ENCODE measurements at regions of chr16 and their contacts with region 1.

Region 1: DNA sequence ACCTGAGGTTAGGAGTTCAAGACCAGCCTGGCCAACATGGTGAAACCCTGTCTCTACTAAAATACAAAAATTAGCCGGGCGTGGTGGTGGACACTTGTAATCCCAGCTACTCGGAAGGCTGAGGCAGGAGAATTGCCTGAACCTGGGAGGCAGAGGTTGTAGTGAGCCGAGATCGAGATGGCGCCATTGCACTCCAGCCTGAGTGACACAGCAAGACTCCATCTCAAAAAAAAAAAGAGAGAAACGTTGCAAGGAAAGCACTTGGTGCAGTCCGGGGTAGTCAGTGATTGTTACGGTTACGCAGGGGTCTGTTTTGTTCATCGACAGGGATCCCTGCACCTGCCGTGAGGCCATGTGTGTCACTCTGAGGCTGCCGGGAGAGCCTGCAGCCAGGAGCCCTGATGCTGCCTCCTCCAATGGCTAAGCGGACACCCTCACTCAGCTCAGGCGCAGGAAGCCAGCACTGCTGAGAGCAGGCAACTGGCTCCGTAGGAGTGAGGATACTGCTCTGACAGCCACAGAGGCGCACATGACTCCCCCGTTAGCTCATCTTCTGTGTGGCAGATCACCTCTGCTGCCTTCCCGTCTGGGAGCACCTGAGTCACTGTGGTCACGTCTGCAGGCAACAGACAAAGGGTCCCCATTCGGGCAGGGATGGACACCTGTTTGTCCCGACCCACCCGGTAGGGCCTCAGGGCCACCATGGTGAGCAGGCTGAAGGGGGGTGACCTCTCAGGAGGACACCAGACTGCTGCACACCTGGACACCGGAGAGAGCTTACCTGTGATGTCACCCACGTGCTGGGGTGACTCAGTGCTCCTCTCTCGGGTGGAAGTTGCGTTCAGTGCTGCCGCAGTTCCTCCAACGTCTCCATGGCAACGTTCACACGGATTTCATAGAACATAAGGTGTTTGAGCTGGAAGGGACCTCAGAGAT is 5.2 kb upstream of the RAB26 start:
- H3K4me3 Mint-ChIP-seq: no peak overlapping the region
- H3K27ac Mint-ChIP-seq: no peak overlapping the region
- H3K4me1 Mint-ChIP-seq: peaks cover 11% of the 10 kb centered on the region
- H3K27me3 Mint-ChIP-seq: peaks cover 21% of the 10 kb centered on the region

Region 2: DNA sequence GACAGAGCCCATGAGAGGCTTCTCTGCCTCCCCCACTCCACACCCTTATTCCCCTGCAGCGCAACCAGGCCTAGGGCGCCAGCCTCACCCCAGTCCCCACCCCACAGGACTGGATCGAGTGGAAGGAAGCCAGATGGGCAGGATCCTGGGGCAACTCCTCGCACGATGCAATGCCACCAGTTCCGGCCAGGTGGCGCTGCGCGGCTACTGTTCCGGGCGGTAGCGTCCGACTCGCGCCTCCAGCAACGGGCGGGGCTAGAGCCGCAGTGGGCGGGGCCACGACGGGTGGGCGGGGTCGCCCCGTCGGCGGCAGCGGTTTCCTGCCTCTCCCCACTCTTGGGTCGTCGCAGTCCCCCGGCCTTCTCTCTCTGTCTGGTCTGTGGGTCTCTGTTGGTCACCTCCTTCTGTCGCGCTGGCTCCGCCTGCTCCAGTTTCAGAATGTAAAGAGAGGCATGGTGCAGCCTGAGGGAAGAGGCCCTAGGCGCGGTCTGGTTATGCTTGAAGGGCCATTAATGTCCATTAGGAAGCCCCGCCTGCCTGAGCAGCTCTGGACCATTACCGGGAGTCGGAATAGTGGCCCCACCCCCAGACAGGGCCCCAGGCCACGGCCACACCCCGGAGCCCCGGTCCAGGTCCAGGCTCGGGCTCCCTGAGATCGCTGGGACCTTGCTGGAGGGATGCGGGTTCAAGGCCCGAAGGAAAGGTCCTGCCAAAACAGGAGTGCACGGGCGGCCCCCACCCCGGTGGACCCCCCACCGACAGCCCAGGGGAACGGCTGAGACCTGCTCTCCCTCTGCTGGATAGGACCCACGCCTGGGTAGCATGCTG is 119.9 kb before region 1 on chr16:
- intact Hi-C with region 1: loop called (anchors 2 kb)
- H3K4me3 Mint-ChIP-seq: peak overlapping the region; percentile 71
- H3K27ac Mint-ChIP-seq: peak overlapping the region; percentile 67
- H3K4me1 Mint-ChIP-seq: peaks cover 43% of the 10 kb centered on the region
- H3K27me3 Mint-ChIP-seq: peaks cover 80% of the 10 kb centered on the region

Region 3: GRCh38 chr16:2500918-2501750 is 357.9 kb after region 1 on chr16:
- intact Hi-C with region 1: no loop called
- H3K4me3 Mint-ChIP-seq: peak overlapping the region; percentile 71
- H3K27ac Mint-ChIP-seq: peak overlapping the region; percentile 72
- H3K4me1 Mint-ChIP-seq: peaks cover 58% of the 10 kb centered on the region
- H3K27me3 Mint-ChIP-seq: no peaks in the 10 kb centered on the region

Measured in dendritic cell treated with granulocyte-macrophage colony-stimulating factor and Interleukin-4, amounts not matched to agents 40 ng/mL and 50 ng/mL, for 4 days (primary cell).